ENCODE measurements at regions of chr6 and their contacts with region 1.

Region 1: GRCh38 chr6:16964553-16965501 is 137.0 kb upstream of the STMND1 start:
- DNase-seq: peak; percentile 57 to 83 (median 82)
- ATAC-seq: peak; percentile 90 to 92
- H3K4me3 ChIP-seq: no peak overlapping the region
- H3K27ac ChIP-seq: no peak overlapping the region
- H3K4me1 ChIP-seq: no peaks in the 10 kb centered on the region
- H3K27me3 ChIP-seq: no peaks in the 10 kb centered on the region

Region 2: DNA sequence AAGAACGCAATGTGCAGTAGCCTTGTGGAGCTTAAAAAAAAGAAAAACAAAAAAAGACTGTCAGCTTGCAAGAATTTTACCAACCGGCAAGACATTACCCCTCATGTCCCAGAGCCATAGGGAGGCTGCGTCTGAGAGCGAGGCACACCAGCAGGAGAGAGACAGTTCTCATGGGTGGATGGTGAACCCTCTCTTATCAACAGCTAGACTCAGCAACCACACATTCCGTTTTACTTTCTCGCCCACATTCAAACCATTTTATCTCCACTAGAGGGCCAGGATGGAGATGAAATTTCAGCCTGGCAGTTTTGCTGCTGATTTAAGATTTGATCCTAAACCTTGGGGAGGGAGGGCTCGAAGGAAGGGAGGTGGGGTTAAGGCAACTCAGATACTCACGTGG is 450.6 kb before region 1 on chr6:
- intact Hi-C with region 1: loop called in 1 of 4 experiments (anchors 10 kb)
- DNase-seq: no peak
- ATAC-seq: peak; percentile 58 to 61
- H3K4me3 ChIP-seq: no peak overlapping the region
- H3K27ac ChIP-seq: no peak overlapping the region
- H3K4me1 ChIP-seq: peaks cover 10% of the 10 kb centered on the region
- H3K27me3 ChIP-seq: no peaks in the 10 kb centered on the region

Region 3: DNA sequence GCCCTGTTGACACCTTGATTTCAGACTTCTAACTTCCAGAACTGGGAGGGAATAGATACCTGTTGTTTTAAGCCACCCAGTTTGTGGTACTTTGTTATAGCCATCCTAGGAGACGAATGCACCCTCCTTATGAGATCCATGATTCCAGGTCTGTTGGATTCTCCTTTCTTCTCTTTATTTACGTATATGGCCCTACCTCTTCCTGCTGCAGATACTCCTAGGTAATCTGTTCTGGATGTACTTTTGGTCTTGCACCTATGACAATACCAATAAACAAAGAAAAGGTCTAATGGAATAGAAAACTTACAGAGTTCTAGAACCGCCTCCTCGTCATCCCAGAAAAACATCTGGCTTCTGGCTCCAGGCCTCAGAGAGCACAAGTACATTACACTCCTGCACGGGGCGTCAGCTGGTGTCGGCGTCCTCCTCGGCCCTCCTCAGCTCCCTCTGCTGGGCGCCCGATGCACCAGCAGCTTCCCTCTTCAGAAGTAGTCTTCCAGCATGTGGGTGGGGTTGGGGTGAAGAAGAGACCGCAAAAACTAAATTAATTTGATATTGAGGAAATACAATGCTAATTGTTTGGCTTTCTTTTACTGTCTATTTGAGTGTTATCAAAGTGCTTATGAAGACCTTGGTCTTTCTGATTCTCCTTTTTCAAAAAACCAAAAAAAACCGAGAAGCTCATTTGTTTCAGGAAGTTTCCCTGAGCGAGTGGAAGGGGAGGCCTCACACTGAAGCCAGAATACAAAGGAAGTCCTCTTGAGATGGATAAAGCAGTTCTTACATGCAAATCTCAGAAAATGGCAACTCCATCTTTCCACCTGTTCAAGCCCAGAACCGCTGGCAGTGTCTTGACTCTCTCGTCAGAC is 193.9 kb before region 1 on chr6:
- intact Hi-C with region 1: loop called (anchors 5 to 10 kb)
- DNase-seq: peak; percentile 82 to 91 (median 90)
- ATAC-seq: peak; percentile 90 to 91
- H3K4me3 ChIP-seq: no peak overlapping the region
- H3K27ac ChIP-seq: no peak overlapping the region
- H3K4me1 ChIP-seq: no peaks in the 10 kb centered on the region
- H3K27me3 ChIP-seq: no peaks in the 10 kb centered on the region

Region 4: DNA sequence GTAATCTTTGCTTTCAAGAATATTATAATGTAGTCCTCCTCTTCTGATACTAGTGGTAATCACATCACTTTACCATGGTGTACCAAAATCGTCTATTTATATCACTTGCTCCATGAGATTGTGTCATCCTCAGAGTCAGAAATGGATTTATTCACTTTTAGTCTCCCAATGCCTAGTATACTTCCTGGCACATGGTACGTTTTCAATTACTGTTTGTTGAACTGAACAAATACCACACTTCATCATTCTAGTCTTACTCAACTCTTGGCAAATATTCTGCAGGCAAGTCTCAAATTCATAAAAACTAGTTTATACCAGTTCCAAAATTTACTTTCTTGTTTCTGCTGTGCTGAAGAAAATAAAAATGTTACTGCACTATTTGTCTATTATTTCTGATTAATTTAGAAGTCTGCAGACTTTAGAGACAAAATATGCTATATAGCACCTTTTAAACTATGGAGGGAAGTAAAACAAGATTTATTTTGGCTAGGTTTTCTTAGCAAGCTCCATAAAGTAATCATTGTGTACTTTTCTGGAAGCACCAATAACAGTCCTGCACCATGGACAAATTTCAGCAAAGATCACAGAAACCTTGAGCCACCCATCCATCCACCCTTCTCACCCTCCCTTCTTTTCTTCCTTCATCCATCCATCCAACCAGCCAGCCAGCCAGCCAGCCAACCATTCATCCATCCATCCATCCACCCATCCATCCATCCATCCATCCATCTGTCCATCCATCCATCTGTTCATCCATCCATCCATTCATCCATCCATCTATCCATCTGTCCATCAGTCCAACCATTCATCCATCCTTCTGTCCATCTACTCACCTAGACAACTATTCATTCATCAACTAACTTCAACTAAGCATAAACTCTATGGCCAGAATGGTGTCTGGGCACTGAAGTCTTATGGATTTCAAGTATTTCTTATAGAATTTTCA is 34.9 kb after region 1 on chr6:
- intact Hi-C with region 1: no loop called
- DNase-seq: no peak
- ATAC-seq: peak in 1 of 2 donors; percentile 40
- H3K4me3 ChIP-seq: no peak overlapping the region
- H3K27ac ChIP-seq: no peak overlapping the region
- H3K4me1 ChIP-seq: no peaks in the 10 kb centered on the region
- H3K27me3 ChIP-seq: no peaks in the 10 kb centered on the region

Measured in right cardiac atrium (tissue), 5 donors.